ENCODE measurements at regions of chr12 and their contacts with region 1.

Region 1: GRCh38 chr12:108856428-108857157 is 790 bp downstream of the SSH1 start:
- DNase-seq: peak; percentile 40
- H3K4me3 Mint-ChIP-seq: peak overlapping the region; percentile 83
- H3K27ac Mint-ChIP-seq: peak overlapping the region; percentile 84
- H3K4me1 Mint-ChIP-seq: peaks cover 56% of the 10 kb centered on the region
- H3K27me3 Mint-ChIP-seq: no peaks in the 10 kb centered on the region

Region 2: GRCh38 chr12:107057071-107057818 is 1799.3 kb before region 1 on chr12:
- intact Hi-C with region 1: no loop called
- DNase-seq: no peak
- H3K4me3 Mint-ChIP-seq: no peak overlapping the region
- H3K27ac Mint-ChIP-seq: no peak overlapping the region
- H3K4me1 Mint-ChIP-seq: peaks cover 2% of the 10 kb centered on the region
- H3K27me3 Mint-ChIP-seq: peaks cover 2% of the 10 kb centered on the region

Region 3: DNA sequence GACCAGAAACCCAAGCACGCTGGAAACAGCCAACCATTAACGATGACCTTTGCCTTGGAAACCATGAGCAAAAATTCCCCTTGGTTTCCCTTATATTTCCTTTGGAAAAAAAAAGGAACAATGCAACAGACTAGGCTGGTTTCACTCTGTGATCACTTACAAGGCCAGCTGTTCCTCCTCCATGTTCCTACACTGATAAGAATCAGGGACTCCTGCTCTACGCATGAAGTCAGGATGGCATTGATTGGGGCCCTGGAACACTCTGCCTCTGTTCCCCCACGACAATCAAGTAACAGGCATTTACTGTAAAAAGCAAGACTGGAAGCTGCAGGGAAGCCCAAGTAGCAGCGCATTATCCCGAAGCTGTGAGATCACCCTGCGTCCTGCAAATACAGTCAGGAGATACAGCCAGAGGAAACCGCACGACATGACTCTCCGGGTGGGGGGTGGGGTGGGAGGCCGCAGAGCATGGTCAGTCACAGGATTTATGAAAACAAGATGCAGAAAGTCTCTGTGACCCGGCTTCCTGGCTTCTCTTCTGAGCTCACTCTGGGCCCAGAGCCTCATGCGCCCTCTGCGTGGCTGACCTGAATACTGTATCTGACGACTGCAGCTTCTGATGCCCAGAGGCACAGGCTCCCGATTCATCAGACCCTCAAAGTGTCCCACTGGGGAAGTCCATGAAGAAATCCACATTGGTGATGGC is 30.3 kb before region 1 on chr12:
- intact Hi-C with region 1: loop called (anchors 2 kb)
- DNase-seq: no peak
- H3K4me3 Mint-ChIP-seq: peak overlapping the region; percentile 53
- H3K27ac Mint-ChIP-seq: peak overlapping the region; percentile 76
- H3K4me1 Mint-ChIP-seq: peaks cover 69% of the 10 kb centered on the region
- H3K27me3 Mint-ChIP-seq: no peaks in the 10 kb centered on the region

Region 4: GRCh38 chr12:108831309-108831991 is 25.1 kb before region 1 on chr12:
- intact Hi-C with region 1: loop called (anchors 2 kb)
- DNase-seq: no peak
- H3K4me3 Mint-ChIP-seq: no peak overlapping the region
- H3K27ac Mint-ChIP-seq: peak overlapping the region; percentile 78
- H3K4me1 Mint-ChIP-seq: peaks cover 68% of the 10 kb centered on the region
- H3K27me3 Mint-ChIP-seq: no peaks in the 10 kb centered on the region

Region 5: GRCh38 chr12:108838194-108839017 is 18.2 kb before region 1 on chr12:
- intact Hi-C with region 1: loop called (anchors 1 kb)
- DNase-seq: peak; percentile 75
- H3K4me3 Mint-ChIP-seq: peak overlapping the region; percentile 73
- H3K27ac Mint-ChIP-seq: peak overlapping the region; percentile 97
- H3K4me1 Mint-ChIP-seq: peaks cover 59% of the 10 kb centered on the region
- H3K27me3 Mint-ChIP-seq: no peaks in the 10 kb centered on the region

Region 6: GRCh38 chr12:109222496-109222895 is 365.9 kb after region 1 on chr12:
- intact Hi-C with region 1: no loop called
- DNase-seq: no peak
- H3K4me3 Mint-ChIP-seq: no peak overlapping the region
- H3K27ac Mint-ChIP-seq: no peak overlapping the region
- H3K4me1 Mint-ChIP-seq: no peaks in the 10 kb centered on the region
- H3K27me3 Mint-ChIP-seq: no peaks in the 10 kb centered on the region